SK-N-SH (cell line): ENCODE measurements at regions of chr2 and their contacts with region 1.

Region 1: GRCh38 chr2:84314901-84315330 is 144.2 kb downstream of the SUCLG1 start:
- DNase-seq: peak; percentile 62
- H3K4me3 ChIP-seq: no peak overlapping the region
- H3K27ac ChIP-seq: no peak overlapping the region
- H3K4me1 ChIP-seq: peaks cover 0 to 5% of the 10 kb centered on the region in 2 experiments; a peak in 1 of 4 replicates
- H3K27me3 ChIP-seq: peaks cover 8% of the 10 kb centered on the region; the same call in 1 of the 2 replicates
- CTCF ChIP-seq: peak; percentile 86
- EP300 ChIP-seq: no peak
- RAD21 ChIP-seq: peak; percentile 88

Region 2: GRCh38 chr2:84302513-84303412 is 12.2 kb before region 1 on chr2:
- CTCF ChIA-PET with region 1: interaction called, 13 read pairs
- POLR2A ChIA-PET with region 1: no interaction called
- DNase-seq: peak; percentile 64
- H3K4me3 ChIP-seq: no peak overlapping the region; a peak in 1 of 4 replicates
- H3K27ac ChIP-seq: no peak overlapping the region
- H3K4me1 ChIP-seq: no peaks in the 10 kb centered on the region
- H3K27me3 ChIP-seq: peaks cover 5% of the 10 kb centered on the region; the same call in 1 of the 2 replicates
- CTCF ChIP-seq: peak; percentile 82
- EP300 ChIP-seq: no peak
- RAD21 ChIP-seq: peak; percentile 74